AG04449 (cell line): ENCODE measurements at regions of chr2 and their contacts with region 1.

Region 1: DNA sequence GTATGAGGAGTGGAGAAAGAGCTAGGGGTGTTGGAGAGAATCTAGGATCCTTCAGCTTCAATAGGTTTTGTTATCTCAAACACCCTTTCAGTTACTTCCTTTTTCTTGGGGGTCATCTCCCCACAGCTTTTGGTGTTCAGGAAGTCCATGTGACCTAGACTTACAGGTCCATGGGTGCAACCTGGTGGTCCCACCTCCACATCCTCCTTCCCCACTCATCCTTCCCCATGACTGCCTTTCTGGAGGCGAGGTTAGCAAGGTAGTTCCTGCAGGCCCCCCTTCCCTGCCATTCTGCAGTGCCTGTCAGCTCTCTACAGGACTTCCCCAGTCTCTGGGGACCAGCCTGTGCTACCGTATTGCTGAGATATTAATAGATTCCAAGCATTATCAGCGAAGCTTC is 107.6 kb downstream of the TMEM17 start:
- DNase-seq: no peak
- H3K4me3 ChIP-seq: no peak overlapping the region
- CTCF ChIP-seq: no peak

Region 2: DNA sequence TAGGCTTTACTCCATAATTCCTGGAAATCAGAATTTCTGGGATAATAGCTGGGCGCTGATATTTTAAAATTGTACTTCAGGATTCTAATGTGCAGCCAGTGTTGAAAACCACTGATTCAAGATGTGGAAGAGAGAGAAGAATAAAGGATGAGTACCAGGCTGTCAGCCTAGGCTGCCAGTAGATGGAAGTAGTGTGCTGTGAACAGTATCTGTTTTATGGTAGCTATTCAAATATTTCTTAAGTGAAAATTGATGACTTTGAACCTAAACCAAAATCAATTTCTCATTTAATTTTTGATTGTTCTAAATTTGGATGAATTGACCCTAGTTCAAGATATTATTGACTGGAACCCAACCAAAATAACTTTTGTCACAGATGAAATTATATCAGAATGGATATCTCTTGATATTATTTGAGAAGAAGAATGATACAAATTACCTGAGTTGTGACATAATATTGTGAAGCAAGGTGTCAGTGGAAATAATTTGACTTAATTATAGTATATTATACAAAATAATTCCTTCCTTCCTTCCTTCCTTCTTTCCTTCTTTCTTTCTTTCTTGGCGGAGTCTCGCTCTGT is 404.8 kb before region 1 on chr2:
- CTCF ChIA-PET with region 1: interaction called, 12 read pairs
- POLR2A ChIA-PET with region 1: no interaction called
- DNase-seq: peak; percentile 2
- H3K4me3 ChIP-seq: no peak overlapping the region
- CTCF ChIP-seq: peak; percentile 72